ENCODE measurements at regions of chr17 and their contacts with region 1.

Region 1: GRCh38 chr17:29931231-29931932 is 1.4 kb upstream of the SSH2 start:
- DNase-seq: peak; percentile 35 to 90
- ATAC-seq: peak; percentile 57 to 82 (median 63)
- H3K4me3 ChIP-seq: no peak overlapping the region
- H3K4me3 Mint-ChIP-seq: no peak overlapping the region
- H3K27ac ChIP-seq: no peak overlapping the region
- H3K27ac Mint-ChIP-seq: no peak overlapping the region
- H3K4me1 ChIP-seq: peaks cover 17% of the 10 kb centered on the region
- H3K4me1 Mint-ChIP-seq: peaks cover 24 to 32% of the 10 kb centered on the region in 2 donors
- H3K27me3 ChIP-seq: no peaks in the 10 kb centered on the region
- H3K27me3 Mint-ChIP-seq: peaks cover 0 to 2% of the 10 kb centered on the region in 2 donors
- CTCF ChIP-seq: peak; percentile 88

Region 2: GRCh38 chr17:29579866-29580771 is 351.3 kb before region 1 on chr17:
- intact Hi-C with region 1: loop called (anchors 1 kb)
- DNase-seq: peak; percentile 85 to 96
- ATAC-seq: peak; percentile 97 to 99 (median 99)
- H3K4me3 ChIP-seq: no peak overlapping the region
- H3K4me3 Mint-ChIP-seq: no peak overlapping the region
- H3K27ac ChIP-seq: peak overlapping the region; percentile 21
- H3K27ac Mint-ChIP-seq: peak overlapping the region; percentile 37 to 52
- H3K4me1 ChIP-seq: peaks cover 17% of the 10 kb centered on the region
- H3K4me1 Mint-ChIP-seq: peaks cover 9 to 24% of the 10 kb centered on the region in 2 donors
- H3K27me3 ChIP-seq: no peaks in the 10 kb centered on the region
- H3K27me3 Mint-ChIP-seq: no peaks in the 10 kb centered on the region
- CTCF ChIP-seq: peak; percentile 85

Region 3: GRCh38 chr17:29640413-29640812 is 291.0 kb before region 1 on chr17:
- intact Hi-C with region 1: loop called (anchors 2 kb)
- DNase-seq: no peak
- ATAC-seq: no peak
- H3K4me3 ChIP-seq: no peak overlapping the region
- H3K4me3 Mint-ChIP-seq: no peak overlapping the region
- H3K27ac ChIP-seq: no peak overlapping the region
- H3K27ac Mint-ChIP-seq: peak overlapping the region; percentile 83 to 87
- H3K4me1 ChIP-seq: peaks cover 5% of the 10 kb centered on the region
- H3K4me1 Mint-ChIP-seq: peaks cover 21 to 32% of the 10 kb centered on the region in 2 donors
- H3K27me3 ChIP-seq: no peaks in the 10 kb centered on the region
- H3K27me3 Mint-ChIP-seq: no peaks in the 10 kb centered on the region
- CTCF ChIP-seq: no peak

Region 4: DNA sequence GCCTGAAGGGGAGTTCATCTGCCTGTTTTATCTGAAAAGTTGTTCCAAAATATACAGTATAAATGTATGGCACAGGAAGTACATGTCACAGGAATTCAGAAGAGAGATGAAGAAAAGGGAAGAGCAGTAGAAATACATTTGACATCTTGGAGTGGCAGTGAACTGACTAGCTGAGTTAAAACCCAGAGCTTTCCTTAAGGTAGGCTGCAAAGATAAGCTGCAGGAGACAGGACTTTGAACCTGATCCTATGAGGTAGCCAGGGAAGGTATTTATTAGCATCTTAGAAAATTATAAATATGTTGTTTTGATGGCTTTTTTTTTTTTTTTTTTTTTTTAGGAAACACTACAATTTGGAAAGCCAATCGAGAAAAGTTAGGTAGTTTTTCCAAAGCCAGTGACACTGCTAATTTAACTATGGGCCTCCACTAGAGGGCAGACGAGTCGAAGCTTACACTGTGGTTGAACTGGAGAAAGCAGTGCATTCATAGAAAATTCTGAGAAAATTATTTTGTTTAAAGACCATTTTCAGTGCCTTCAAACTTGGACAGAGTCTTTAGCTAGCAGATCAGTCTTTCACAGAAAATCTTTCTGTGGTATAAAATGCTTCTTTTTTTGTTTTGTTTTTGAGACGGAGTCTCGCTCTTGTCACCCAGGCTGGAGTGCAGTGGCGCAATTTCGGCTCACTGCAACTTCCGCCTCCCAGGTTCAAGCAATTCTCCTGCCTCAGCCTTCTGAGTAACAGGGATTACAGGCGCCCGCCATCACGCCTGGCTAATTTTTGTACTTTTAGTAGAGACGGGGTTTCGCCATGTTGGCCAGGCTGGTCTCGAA is 123.6 kb before region 1 on chr17:
- intact Hi-C with region 1: loop called (anchors 1 kb)
- DNase-seq: peak; percentile 43 to 85
- ATAC-seq: peak; percentile 78 to 88 (median 83)
- H3K4me3 ChIP-seq: no peak overlapping the region
- H3K4me3 Mint-ChIP-seq: no peak overlapping the region
- H3K27ac ChIP-seq: no peak overlapping the region
- H3K27ac Mint-ChIP-seq: no peak overlapping the region
- H3K4me1 ChIP-seq: no peaks in the 10 kb centered on the region
- H3K4me1 Mint-ChIP-seq: peaks cover 0 to 5% of the 10 kb centered on the region in 2 donors
- H3K27me3 ChIP-seq: no peaks in the 10 kb centered on the region
- H3K27me3 Mint-ChIP-seq: no peaks in the 10 kb centered on the region
- CTCF ChIP-seq: peak; percentile 91

Region 5: GRCh38 chr17:29867643-29868181 is 63.7 kb before region 1 on chr17:
- intact Hi-C with region 1: loop called (anchors 5 kb)
- DNase-seq: peak in 1 of 2 donors; percentile 23
- ATAC-seq: no peak
- H3K4me3 ChIP-seq: no peak overlapping the region
- H3K4me3 Mint-ChIP-seq: no peak overlapping the region
- H3K27ac ChIP-seq: no peak overlapping the region
- H3K27ac Mint-ChIP-seq: no peak overlapping the region
- H3K4me1 ChIP-seq: no peaks in the 10 kb centered on the region
- H3K4me1 Mint-ChIP-seq: peaks cover 38 to 51% of the 10 kb centered on the region in 2 donors
- H3K27me3 ChIP-seq: no peaks in the 10 kb centered on the region
- H3K27me3 Mint-ChIP-seq: no peaks in the 10 kb centered on the region
- CTCF ChIP-seq: no peak

Region 6: DNA sequence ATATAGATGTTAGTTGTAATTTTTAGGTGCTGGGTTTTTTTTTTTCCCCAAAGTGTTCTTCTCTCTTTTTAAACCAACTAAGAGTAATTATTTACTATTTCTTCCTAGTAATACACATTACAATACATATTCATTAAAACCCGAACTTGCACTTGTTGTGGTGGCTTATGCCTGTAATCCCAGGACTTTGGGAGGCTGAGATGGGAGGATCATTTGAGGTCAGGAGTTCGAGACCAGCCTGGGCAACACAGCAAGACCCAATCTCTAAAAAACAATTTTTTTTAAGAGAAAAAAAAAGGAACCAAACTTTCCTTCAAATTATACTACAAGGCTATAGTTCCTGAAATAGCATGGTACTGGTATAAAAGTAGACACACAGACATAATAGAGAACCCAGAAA is 13.9 kb after region 1 on chr17:
- intact Hi-C with region 1: no loop called
- DNase-seq: no peak
- ATAC-seq: no peak
- H3K4me3 ChIP-seq: no peak overlapping the region
- H3K4me3 Mint-ChIP-seq: no peak overlapping the region
- H3K27ac ChIP-seq: no peak overlapping the region
- H3K27ac Mint-ChIP-seq: no peak overlapping the region
- H3K4me1 ChIP-seq: no peaks in the 10 kb centered on the region
- H3K4me1 Mint-ChIP-seq: no peaks in the 10 kb centered on the region
- H3K27me3 ChIP-seq: no peaks in the 10 kb centered on the region
- H3K27me3 Mint-ChIP-seq: no peaks in the 10 kb centered on the region
- CTCF ChIP-seq: no peak

Measured in natural killer cell (primary cell).